BJ (cell line): ENCODE measurements at regions of chr15 and their contacts with region 1.

Region 1: GRCh38 chr15:43390723-43391122 is 19.8 kb downstream of the TUBGCP4 start:
- DNase-seq: no peak
- H3K4me3 ChIP-seq: no peak overlapping the region
- H3K27me3 ChIP-seq: no peaks in the 10 kb centered on the region
- CTCF ChIP-seq: no peak

Region 2: GRCh38 chr15:43209059-43209824 is 181.5 kb before region 1 on chr15:
- CTCF ChIA-PET with region 1: no interaction called
- POLR2A ChIA-PET with region 1: no interaction called
- DNase-seq: no peak
- H3K4me3 ChIP-seq: no peak overlapping the region
- H3K27me3 ChIP-seq: peaks cover 37% of the 10 kb centered on the region
- CTCF ChIP-seq: no peak

Region 3: GRCh38 chr15:43253431-43254403 is 137.0 kb before region 1 on chr15:
- CTCF ChIA-PET with region 1: no interaction called
- POLR2A ChIA-PET with region 1: no interaction called
- DNase-seq: no peak
- H3K4me3 ChIP-seq: no peak overlapping the region
- H3K27me3 ChIP-seq: peaks cover 3% of the 10 kb centered on the region
- CTCF ChIP-seq: no peak

Region 4: GRCh38 chr15:43325039-43325684 is 65.6 kb before region 1 on chr15:
- CTCF ChIA-PET with region 1: no interaction called
- POLR2A ChIA-PET with region 1: no interaction called
- DNase-seq: no peak
- H3K4me3 ChIP-seq: no peak overlapping the region
- H3K27me3 ChIP-seq: peaks cover 3% of the 10 kb centered on the region; the same call in 1 of the 2 replicates
- CTCF ChIP-seq: no peak

Region 5: GRCh38 chr15:43376017-43376705 is 14.6 kb before region 1 on chr15:
- CTCF ChIA-PET with region 1: interaction called, 10 read pairs
- POLR2A ChIA-PET with region 1: interaction called, 16 read pairs
- DNase-seq: no peak
- H3K4me3 ChIP-seq: no peak overlapping the region
- H3K27me3 ChIP-seq: no peaks in the 10 kb centered on the region
- CTCF ChIP-seq: peak; percentile 87

Region 6: GRCh38 chr15:43406808-43407207 is 16.1 kb after region 1 on chr15:
- CTCF ChIA-PET with region 1: interaction called, 4 read pairs
- POLR2A ChIA-PET with region 1: interaction called, 14 read pairs
- DNase-seq: no peak
- H3K4me3 ChIP-seq: no peak overlapping the region
- H3K27me3 ChIP-seq: no peaks in the 10 kb centered on the region
- CTCF ChIP-seq: no peak

Region 7: DNA sequence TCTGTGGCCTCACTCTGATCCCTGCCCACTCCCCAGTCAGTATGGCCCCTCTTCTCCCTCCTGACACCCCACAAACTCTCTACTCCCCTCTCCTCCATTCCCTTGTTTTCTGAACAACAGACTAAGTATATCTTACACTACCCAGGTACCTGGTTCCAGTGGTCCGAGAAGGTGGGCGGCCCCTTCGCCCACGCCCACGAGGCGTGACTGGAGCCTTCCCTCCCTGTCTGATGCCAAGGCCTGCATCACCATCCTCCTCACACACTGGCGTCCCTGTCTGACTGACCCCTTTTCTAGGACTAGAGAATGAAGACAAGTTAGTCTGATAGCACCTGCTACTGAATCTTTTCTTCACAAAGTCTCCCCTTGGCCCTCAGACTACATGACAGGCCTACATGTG is 30.2 kb after region 1 on chr15:
- CTCF ChIA-PET with region 1: no interaction called
- POLR2A ChIA-PET with region 1: no interaction called
- DNase-seq: no peak
- H3K4me3 ChIP-seq: no peak overlapping the region
- H3K27me3 ChIP-seq: no peaks in the 10 kb centered on the region
- CTCF ChIP-seq: no peak